Natural killer cell (primary cell): ENCODE measurements at regions of chr13 and their contacts with region 1.

Region 1: DNA sequence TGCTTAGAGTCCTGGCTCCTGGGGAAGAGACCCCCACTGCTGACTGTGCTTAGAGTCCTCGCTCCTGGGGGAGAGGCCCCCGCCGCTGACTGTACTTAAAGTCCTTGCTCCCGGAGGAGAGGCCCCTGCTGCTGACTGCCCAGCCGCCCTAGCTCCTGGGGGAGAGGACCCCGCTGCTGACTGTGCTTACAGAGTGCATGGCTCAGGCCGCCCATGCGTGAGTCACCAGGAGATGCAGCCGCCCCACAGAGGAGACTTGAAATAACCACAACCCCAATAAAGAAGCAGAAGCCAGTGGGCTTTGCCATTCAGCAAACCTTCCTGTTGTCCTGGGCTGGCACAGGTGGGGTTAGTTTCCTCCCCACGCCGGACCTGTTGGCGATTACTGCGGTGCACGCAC is 79.2 kb upstream of the C13orf46 start:
- DNase-seq: no peak
- ATAC-seq: peak in 2 of 3 donors; percentile 37 to 50
- H3K4me3 ChIP-seq: no peak overlapping the region
- H3K4me3 Mint-ChIP-seq: peak overlapping the region; percentile 67
- H3K27ac ChIP-seq: no peak overlapping the region
- H3K27ac Mint-ChIP-seq: peak overlapping the region; percentile 80 to 81
- H3K4me1 ChIP-seq: peaks cover 96% of the 10 kb centered on the region
- H3K4me1 Mint-ChIP-seq: peaks cover 63 to 65% of the 10 kb centered on the region in 2 donors
- H3K27me3 ChIP-seq: no peaks in the 10 kb centered on the region
- H3K27me3 Mint-ChIP-seq: no peaks in the 10 kb centered on the region
- CTCF ChIP-seq: no peak

Region 2: GRCh38 chr13:114065141-114065925 is 12.3 kb after region 1 on chr13:
- intact Hi-C with region 1: loop called (anchors 2 kb)
- DNase-seq: peak; percentile 65 to 81
- ATAC-seq: peak; percentile 64 to 84 (median 76)
- H3K4me3 ChIP-seq: peak overlapping the region; percentile 41
- H3K4me3 Mint-ChIP-seq: peak overlapping the region; percentile 91
- H3K27ac ChIP-seq: peak overlapping the region; percentile 82
- H3K27ac Mint-ChIP-seq: peak overlapping the region; percentile 87 to 95
- H3K4me1 ChIP-seq: peaks cover 78% of the 10 kb centered on the region
- H3K4me1 Mint-ChIP-seq: peaks cover 62 to 78% of the 10 kb centered on the region in 2 donors
- H3K27me3 ChIP-seq: no peaks in the 10 kb centered on the region
- H3K27me3 Mint-ChIP-seq: no peaks in the 10 kb centered on the region
- CTCF ChIP-seq: no peak